ENCODE measurements at regions of chr17 and their contacts with region 1.

Region 1: DNA sequence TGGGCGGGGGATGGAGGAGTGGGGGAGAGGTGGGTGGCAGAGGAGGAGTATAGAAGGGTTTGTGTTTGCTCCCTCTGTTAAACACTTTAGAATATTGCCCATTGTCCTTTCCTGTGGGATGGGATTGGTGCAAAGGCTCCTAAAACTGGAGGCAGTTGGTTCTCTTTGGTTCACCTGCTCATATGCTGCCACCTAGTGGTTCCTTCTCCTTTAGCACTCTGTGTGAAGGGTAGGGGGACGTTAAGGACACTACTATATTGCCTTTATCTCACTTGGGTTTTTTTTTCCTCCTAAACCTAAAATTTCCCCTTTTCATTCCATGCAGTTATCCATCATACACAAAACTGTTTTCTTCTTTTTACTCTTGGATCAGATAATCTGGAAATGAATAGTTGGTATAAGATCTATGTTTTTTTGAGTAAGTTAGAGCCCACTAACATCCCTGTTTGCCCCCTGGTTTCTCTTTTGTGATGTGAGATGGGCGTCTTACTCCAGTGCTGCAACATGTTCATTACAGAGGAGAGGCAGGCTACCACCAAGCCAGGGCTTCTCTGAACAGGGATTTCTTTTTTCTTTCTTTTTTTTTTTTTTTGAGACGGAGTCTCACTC is 23.8 kb downstream of the SNX11 start:
- DNase-seq: peak in 3 of 5 donors; percentile 32 to 68 (median 60)
- ATAC-seq: peak; percentile 75 to 91 (median 86)
- H3K4me3 ChIP-seq: no peak overlapping the region
- H3K27ac ChIP-seq: no peak overlapping the region
- H3K4me1 ChIP-seq: peaks cover 0 to 7% (median 0%) of the 10 kb centered on the region in 12 donors
- H3K27me3 ChIP-seq: peaks cover 0 to 5% (median 0%) of the 10 kb centered on the region in 9 donors
- CTCF ChIP-seq: peak; percentile 75 to 91 (median 84)
- POLR2A ChIP-seq: no peak

Region 2: DNA sequence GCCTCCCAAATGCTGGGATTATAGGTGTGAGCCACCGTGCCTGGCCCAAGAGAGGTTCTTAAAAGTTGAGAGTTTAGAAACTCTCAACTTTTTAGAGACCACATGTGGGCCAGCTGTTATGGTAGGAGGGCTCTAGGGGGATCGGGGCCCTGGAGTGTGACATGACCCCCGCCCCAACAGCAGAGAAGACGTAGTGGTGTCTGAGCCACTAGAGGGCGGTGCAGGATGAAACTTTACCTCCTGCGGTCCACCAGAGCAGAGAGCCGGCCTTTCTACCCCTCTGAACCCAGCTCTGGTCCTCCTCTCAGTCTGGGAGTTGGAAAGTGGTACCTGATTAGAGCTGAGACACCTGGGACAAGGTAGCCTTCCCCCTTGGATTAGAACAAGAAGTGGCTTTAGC is 153.0 kb before region 1 on chr17:
- intact Hi-C with region 1: loop called in 1 of 10 experiments (anchors 5 kb)
- DNase-seq: peak in 4 of 5 donors; percentile 49 to 62 (median 56)
- ATAC-seq: peak in 3 of 4 donors; percentile 68 to 80 (median 77)
- H3K4me3 ChIP-seq: no peak overlapping the region
- H3K27ac ChIP-seq: no peak overlapping the region
- H3K4me1 ChIP-seq: peaks cover 0 to 30% (median 4%) of the 10 kb centered on the region in 12 donors
- H3K27me3 ChIP-seq: no peaks in the 10 kb centered on the region
- CTCF ChIP-seq: peak; percentile 56 to 76 (median 63)
- POLR2A ChIP-seq: no peak

Region 3: GRCh38 chr17:48024937-48025906 is 106.1 kb before region 1 on chr17:
- intact Hi-C with region 1: loop called (anchors 1 to 2 kb)
- DNase-seq: peak; percentile 97 to 99 (median 97)
- ATAC-seq: peak; percentile 88 to 92 (median 89)
- H3K4me3 ChIP-seq: peak overlapping the region; percentile 22 to 69 (median 53)
- H3K27ac ChIP-seq: peak overlapping the region; percentile 7 to 90 (median 80)
- H3K4me1 ChIP-seq: peaks cover 6 to 43% (median 38%) of the 10 kb centered on the region in 12 donors
- H3K27me3 ChIP-seq: peaks cover 0 to 27% (median 0%) of the 10 kb centered on the region in 9 donors
- CTCF ChIP-seq: peak; percentile 63 to 99 (median 76)
- POLR2A ChIP-seq: peak in 1 of 2 donors; percentile 40

Region 4: DNA sequence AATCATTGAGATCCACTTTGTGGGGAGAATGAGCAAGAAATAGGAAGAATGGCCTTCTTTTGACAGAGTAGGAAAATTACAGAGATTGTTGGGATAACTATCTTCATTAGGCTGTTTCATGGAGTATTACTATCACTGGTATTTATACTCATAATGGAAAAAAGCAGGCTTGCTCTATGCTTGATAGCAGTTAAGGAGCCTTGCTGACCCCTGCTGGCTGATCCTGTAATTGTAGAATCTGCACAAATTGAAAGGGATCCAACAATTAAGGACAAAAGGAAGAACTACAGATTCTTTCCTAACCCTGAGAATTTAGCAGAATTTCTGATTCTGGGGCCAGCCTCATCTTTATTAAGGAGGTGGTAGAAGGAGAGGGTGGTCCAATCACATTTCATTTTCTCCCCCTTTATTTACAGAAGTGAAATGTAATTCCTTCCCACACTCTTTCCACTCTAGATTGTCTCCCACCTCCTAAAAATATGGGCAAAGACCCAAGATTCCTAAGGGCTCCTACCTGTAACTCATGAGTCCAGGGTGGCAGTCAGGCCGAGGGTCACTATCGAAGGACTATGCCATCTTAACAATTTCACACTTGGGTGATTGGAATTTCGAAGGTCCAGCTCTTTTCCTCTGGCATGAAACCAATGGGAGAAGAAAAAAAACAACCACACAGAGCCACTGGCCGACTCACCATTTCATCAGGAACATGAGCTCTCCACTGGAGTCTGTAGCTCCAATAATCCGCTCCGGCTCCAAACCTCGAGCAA is 56.8 kb before region 1 on chr17:
- intact Hi-C with region 1: loop called in 9 of 10 experiments (anchors 2 to 5 kb)
- DNase-seq: peak in 4 of 5 donors; percentile 74 to 80 (median 76)
- ATAC-seq: peak; percentile 75 to 87 (median 83)
- H3K4me3 ChIP-seq: no peak overlapping the region
- H3K27ac ChIP-seq: peak overlapping the region in 1 of 12 donors; percentile 37
- H3K4me1 ChIP-seq: peaks cover 0 to 9% (median 2%) of the 10 kb centered on the region in 12 donors
- H3K27me3 ChIP-seq: no peaks in the 10 kb centered on the region
- CTCF ChIP-seq: peak; percentile 74 to 90 (median 84)
- POLR2A ChIP-seq: no peak

Region 5: DNA sequence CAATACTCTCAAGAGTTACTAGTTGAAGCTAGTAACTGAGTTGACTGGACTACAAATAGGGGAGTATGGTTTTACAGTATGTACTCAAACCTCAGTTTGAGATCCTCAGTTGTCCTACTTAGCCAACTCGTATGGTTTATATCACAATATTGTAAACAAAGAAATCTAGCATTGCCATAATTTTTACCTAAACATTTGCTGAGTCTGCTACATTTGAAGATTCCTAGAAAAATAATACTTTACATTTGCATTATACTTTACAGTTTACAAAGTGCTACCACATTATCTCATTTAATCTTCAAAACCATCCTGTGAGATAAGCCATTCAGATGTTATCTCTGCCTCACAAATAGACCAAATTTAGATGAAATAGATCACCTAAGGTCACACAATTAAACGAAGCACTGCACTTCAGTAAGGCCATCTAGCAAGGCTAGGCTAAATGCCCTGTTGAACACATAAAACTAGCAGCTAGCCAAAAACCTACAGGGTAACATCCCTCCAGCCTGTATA is 46.3 kb before region 1 on chr17:
- intact Hi-C with region 1: loop called in 1 of 10 experiments (anchors 5 kb)
- DNase-seq: no peak
- ATAC-seq: no peak
- H3K4me3 ChIP-seq: no peak overlapping the region
- H3K27ac ChIP-seq: no peak overlapping the region
- H3K4me1 ChIP-seq: peaks cover 0 to 15% (median 9%) of the 10 kb centered on the region in 12 donors
- H3K27me3 ChIP-seq: no peaks in the 10 kb centered on the region
- CTCF ChIP-seq: no peak
- POLR2A ChIP-seq: no peak

Region 6: DNA sequence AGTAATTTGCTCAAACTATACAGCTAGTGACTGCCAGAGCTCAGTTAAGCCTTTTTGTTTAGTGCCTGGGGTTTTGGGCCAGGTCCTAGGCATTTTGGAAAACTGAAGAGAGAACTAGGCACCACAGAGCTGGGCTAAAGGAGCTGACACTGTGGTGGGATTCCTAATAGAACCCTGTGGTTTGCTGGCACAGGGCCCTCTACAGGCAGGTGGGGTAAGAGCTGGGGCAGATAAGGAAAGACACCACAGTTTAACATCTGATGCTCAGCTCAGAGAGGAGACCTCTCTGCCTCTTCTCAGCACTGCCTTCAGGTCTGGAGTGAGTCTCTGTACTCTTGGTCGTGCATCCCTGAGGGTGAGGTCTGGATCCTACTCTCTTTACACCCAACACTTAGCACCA is 97.4 kb after region 1 on chr17:
- intact Hi-C with region 1: no loop called
- DNase-seq: no peak
- ATAC-seq: no peak
- H3K4me3 ChIP-seq: no peak overlapping the region
- H3K27ac ChIP-seq: no peak overlapping the region
- H3K4me1 ChIP-seq: no peaks in the 10 kb centered on the region
- H3K27me3 ChIP-seq: peaks cover 0 to 26% (median 0%) of the 10 kb centered on the region in 9 donors
- CTCF ChIP-seq: no peak
- POLR2A ChIP-seq: no peak